Lower leg skin (tissue), 4 donors: ENCODE measurements at regions of chr1 and their contacts with region 1.

Region 1: DNA sequence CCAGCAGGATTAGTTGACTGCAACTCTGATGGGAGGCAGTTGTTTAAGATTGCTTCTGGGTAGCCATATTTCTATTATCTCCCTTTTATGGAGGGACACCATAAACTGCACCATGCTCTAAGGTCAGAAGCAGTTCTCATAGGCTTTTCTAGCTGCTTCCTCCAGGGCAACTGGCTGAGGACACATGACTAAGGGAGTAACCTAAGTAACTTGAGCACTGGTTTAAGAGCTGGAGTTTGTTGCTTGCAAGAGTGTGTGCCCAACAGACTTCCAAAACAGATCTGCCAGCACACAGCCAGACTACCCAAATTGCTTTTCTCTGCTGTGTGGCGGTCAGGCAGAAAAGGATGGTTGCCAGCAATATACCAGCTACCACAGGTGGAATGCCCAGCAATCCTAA is 111.2 kb upstream of the LHX8 start:
- DNase-seq: no peak
- H3K4me3 ChIP-seq: no peak overlapping the region
- CTCF ChIP-seq: no peak
- POLR2A ChIP-seq: no peak

Region 2: GRCh38 chr1:74286414-74286813 is 736.6 kb before region 1 on chr1:
- intact Hi-C with region 1: loop called (anchors 5 kb)
- DNase-seq: no peak
- H3K4me3 ChIP-seq: no peak overlapping the region
- CTCF ChIP-seq: no peak
- POLR2A ChIP-seq: no peak

Region 3: DNA sequence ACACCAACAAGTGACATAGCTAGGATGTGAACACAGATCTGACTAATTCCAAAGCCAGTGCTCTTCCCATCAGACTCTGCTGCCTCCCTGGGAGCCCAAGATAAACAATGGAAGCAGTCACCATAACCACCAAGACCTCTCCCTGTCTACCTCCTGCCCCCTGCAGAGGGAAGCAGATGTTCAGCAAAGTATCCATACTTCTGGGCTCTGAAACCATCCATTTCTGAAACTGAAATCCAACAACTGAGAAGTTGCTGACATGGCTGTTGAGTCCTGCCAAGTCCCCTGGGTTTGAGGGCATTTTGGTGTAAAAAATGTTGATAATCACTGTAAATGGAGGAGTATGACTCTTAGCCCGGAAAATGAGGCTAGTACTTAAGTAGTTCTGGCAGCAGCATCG is 188.0 kb before region 1 on chr1:
- intact Hi-C with region 1: no loop called
- DNase-seq: no peak
- H3K4me3 ChIP-seq: no peak overlapping the region
- CTCF ChIP-seq: no peak
- POLR2A ChIP-seq: no peak

Region 4: DNA sequence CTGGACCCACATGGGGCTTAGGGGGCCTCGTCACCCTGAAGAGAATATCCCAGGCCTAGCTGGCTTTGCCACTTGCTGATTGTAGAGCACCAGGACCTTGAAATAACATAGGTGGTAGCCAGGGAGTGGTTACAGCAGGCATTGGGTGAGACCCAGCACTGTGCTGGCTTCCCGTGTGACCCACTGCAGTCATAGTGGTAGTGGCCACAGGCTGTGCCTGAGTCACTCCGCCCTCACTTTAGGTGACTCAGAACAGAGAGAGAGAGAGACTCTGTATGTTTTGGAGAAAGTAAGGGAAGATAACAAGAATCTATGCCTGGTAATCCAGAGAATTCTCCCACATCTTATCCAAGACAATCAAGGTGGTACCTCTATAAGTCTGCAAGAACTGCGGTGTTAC is 12.5 kb after region 1 on chr1:
- intact Hi-C with region 1: no loop called
- DNase-seq: no peak
- H3K4me3 ChIP-seq: no peak overlapping the region
- CTCF ChIP-seq: no peak
- POLR2A ChIP-seq: no peak

Region 5: DNA sequence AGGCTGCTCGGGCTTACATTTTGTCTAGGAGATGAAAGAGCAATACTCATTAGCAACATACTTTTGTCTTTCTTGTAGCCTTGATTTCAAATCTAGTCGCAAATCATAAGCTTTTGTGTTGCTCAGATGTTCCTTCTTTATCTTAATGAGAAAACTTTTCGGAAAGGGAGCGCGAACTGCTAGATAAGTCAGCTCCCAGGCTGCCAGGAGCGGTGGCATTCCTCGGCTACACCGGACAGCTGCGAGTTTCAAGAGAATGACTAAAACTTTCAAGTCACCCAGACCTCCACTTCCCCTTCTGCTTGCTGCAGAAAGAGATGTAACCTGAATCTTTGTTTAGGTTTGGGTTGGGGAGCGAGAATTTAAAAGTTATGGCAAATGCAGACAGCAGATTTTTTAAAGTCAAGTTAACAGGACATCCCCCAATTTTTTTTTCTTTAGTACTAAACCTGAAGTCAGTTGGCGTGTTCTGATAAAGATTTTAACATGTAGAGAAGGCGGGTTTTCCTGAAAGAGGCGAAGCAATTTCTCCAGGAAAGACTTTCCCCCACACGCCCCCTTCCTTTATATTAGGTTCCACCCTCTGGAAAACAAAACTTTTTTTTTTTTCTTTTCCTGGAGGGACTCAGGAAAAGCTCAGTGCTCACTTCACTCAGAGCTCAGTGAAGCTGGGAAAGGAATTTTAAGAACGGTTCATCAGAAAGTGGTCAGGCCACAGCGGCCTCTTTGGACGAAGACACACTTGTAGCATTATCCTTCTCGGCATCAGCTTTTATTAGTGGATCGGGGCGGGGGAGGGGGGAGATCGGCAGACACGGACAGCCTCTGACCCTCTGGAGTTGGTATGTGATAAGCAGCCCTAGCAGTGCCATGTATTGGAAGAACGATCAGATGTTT is 111.0 kb after region 1 on chr1 and contains the start of gene LHX8:
- intact Hi-C with region 1: no loop called
- DNase-seq: peak in 1 of 2 donors; percentile 58
- H3K4me3 ChIP-seq: peak within 1 kb of the TSS; percentile 1
- CTCF ChIP-seq: no peak
- POLR2A ChIP-seq: no peak
- total RNA-seq, gene LHX8: not detected